ENCODE measurements at regions of chr16 and their contacts with region 1.

Region 1: DNA sequence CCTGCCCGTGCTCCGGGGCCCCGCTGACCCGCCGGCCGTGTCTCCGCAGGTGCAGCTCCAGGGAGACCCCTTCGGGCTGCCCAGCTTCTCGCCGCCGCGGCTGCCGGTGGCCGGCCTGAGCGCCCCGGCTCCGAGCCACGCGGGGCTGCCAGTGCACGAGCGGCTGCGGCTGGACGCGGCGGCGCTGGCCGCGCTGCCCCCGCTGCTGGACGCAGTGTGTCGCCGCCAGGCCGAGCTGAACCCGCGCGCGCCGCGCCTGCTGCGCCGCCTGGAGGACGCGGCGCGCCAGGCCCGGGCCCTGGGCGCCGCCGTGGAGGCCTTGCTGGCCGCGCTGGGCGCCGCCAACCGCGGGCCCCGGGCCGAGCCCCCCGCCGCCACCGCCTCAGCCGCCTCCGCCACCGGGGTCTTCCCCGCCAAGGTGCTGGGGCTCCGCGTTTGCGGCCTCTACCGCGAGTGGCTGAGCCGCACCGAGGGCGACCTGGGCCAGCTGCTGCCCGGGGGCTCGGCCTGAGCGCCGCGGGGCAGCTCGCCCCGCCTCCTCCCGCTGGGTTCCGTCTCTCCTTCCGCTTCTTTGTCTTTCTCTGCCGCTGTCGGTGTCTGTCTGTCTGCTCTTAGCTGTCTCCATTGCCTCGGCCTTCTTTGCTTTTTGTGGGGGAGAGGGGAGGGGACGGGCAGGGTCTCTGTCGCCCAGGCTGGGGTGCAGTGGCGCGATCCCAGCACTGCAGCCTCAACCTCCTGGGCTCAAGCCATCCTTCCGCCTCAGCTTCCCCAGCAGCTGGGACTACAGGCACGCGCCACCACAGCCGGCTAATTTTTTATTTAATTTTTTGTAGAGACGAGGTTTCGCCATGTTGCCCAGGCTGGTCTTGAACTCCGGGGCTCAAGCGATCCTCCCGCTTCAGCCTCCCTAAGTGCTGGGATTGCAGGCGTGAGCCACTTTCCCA is 5.9 kb downstream of the CTF1 start:
- DNase-seq: peak; percentile 31 to 71 (median 59)
- H3K4me3 ChIP-seq: peak overlapping the region; percentile 63
- H3K4me3 Mint-ChIP-seq: peak overlapping the region; percentile 90 to 98 (median 97)
- H3K27ac ChIP-seq: peak overlapping the region; percentile 54
- H3K27ac Mint-ChIP-seq: peak overlapping the region; percentile 96 to 100 (median 98)
- H3K4me1 ChIP-seq: peaks cover 39% of the 10 kb centered on the region
- H3K4me1 Mint-ChIP-seq: peaks cover 31 to 45% (median 31%) of the 10 kb centered on the region in 3 donors
- H3K27me3 ChIP-seq: no peaks in the 10 kb centered on the region
- H3K27me3 Mint-ChIP-seq: no peaks in the 10 kb centered on the region

Region 2: GRCh38 chr16:30813821-30814189 is 88.5 kb before region 1 on chr16:
- CTCF ChIA-PET with region 1: interaction called, 11 read pairs
- POLR2A ChIA-PET with region 1: no interaction called
- DNase-seq: no peak
- H3K4me3 ChIP-seq: peak overlapping the region; percentile 59
- H3K4me3 Mint-ChIP-seq: peak overlapping the region; percentile 77 to 91 (median 87)
- H3K27ac ChIP-seq: peak overlapping the region; percentile 79
- H3K27ac Mint-ChIP-seq: peak overlapping the region; percentile 69 to 96 (median 90)
- H3K4me1 ChIP-seq: peaks cover 13% of the 10 kb centered on the region
- H3K4me1 Mint-ChIP-seq: peaks cover 7 to 13% (median 13%) of the 10 kb centered on the region in 3 donors
- H3K27me3 ChIP-seq: no peaks in the 10 kb centered on the region
- H3K27me3 Mint-ChIP-seq: no peaks in the 10 kb centered on the region

Region 3: DNA sequence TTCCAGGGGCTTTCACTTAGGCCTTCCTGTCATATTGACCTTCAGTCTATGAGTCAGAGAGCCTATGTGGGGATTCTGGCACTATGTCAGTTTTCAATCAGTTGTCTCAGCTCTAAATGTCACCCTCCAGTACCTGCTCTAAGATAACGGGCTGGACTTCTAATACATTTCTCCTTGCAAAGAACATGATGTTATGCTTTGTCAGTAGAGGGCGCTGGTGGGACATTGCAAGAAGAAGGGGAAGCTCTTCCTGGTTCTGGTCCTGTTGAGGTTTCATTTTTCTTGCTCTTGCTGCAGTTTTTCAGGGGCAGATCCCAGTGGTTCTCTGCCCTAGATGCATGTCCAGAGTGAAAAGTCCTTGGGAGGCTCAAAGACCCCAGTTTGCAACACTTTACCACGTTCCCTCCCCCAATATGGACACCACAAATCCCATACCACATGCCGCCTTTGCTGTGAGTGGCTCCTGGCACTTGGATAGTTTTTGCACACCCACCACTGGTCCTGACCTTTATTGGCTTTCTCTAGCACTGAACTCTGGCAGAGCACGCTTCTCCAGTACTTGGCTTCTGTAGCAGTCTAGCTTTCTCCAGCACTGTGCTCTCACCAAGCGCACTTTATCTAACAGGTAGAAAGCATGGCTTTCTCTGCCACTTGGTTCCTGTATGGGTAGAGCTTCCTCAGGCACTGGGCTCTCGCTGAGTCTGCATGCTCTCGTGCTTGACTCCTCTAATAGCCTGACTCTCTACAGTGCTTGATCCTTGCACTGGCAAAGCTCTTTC is 57.4 kb before region 1 on chr16:
- CTCF ChIA-PET with region 1: interaction called, 88 read pairs
- POLR2A ChIA-PET with region 1: interaction called, 8 read pairs
- DNase-seq: peak; percentile 69 to 86 (median 79)
- H3K4me3 ChIP-seq: peak overlapping the region; percentile 17
- H3K4me3 Mint-ChIP-seq: peak overlapping the region in 6 of 7 donors; percentile 60 to 71 (median 68)
- H3K27ac ChIP-seq: no peak overlapping the region
- H3K27ac Mint-ChIP-seq: peak overlapping the region in 6 of 8 donors; percentile 10 to 86 (median 37)
- H3K4me1 ChIP-seq: peaks cover 7% of the 10 kb centered on the region
- H3K4me1 Mint-ChIP-seq: peaks cover 8 to 10% (median 10%) of the 10 kb centered on the region in 3 donors
- H3K27me3 ChIP-seq: no peaks in the 10 kb centered on the region
- H3K27me3 Mint-ChIP-seq: peaks cover 0 to 2% of the 10 kb centered on the region in 2 donors

Region 4: DNA sequence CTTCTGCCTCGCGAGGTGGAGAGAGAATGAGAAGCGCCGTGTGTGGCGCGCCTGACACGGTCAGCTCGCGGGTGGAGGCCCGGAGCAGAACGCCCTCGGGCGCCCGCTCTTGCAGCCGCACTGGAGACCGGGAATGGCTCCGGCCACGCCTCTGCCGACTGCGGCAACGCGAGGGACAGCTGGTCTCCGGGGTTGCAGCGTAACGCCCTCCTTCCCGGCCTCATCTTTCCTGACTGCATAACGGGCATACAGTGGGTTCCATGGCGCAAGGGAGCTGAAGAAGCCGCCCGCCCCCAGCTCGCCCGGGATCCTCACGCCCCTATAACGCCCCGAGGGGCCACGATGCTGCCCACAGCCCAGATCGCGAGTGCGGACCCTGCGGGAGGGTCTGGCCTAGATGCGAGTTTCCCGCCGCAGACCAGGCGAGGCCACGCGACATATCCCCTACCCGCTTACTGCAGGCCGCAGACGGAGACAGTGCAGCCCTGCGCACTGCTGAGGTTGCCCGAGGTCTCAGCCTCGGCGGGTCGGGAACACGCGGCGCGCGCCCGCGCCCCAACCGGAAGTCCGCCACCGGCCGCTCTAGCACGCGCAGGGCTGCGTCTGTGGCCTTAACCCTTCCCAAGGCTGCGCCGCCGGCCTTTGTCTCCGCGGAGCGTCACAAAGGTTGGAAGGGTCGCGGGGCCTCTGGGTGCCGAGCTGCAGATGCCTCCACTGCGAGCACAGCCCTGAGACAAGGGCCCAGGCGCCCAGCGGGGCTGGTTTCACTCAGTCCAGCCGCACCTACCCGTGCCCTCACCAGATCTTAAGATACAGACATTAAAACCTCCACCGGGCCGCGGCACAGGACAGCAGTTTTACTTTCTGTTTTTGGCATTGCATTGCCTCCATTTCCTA is 27.2 kb before region 1 on chr16:
- CTCF ChIA-PET with region 1: interaction called, 38 read pairs
- POLR2A ChIA-PET with region 1: interaction called, 42 read pairs
- DNase-seq: peak; percentile 76 to 89 (median 85)
- H3K4me3 ChIP-seq: peak overlapping the region; percentile 81
- H3K4me3 Mint-ChIP-seq: peak overlapping the region; percentile 86 to 98 (median 90)
- H3K27ac ChIP-seq: peak overlapping the region; percentile 84
- H3K27ac Mint-ChIP-seq: peak overlapping the region; percentile 90 to 98 (median 97)
- H3K4me1 ChIP-seq: peaks cover 31% of the 10 kb centered on the region
- H3K4me1 Mint-ChIP-seq: peaks cover 31 to 51% (median 44%) of the 10 kb centered on the region in 3 donors
- H3K27me3 ChIP-seq: no peaks in the 10 kb centered on the region
- H3K27me3 Mint-ChIP-seq: no peaks in the 10 kb centered on the region

Region 5: GRCh38 chr16:30922420-30922959 is 20.2 kb after region 1 on chr16:
- CTCF ChIA-PET with region 1: interaction called, 11 read pairs
- POLR2A ChIA-PET with region 1: interaction called, 3 read pairs
- DNase-seq: peak; percentile 99 to 100 (median 100)
- H3K4me3 ChIP-seq: peak overlapping the region; percentile 95
- H3K4me3 Mint-ChIP-seq: peak overlapping the region; percentile 93 to 99 (median 96)
- H3K27ac ChIP-seq: peak overlapping the region; percentile 84
- H3K27ac Mint-ChIP-seq: peak overlapping the region; percentile 95 to 100 (median 98)
- H3K4me1 ChIP-seq: no peaks in the 10 kb centered on the region
- H3K4me1 Mint-ChIP-seq: peaks cover 15 to 33% (median 16%) of the 10 kb centered on the region in 3 donors
- H3K27me3 ChIP-seq: no peaks in the 10 kb centered on the region
- H3K27me3 Mint-ChIP-seq: no peaks in the 10 kb centered on the region

Region 6: DNA sequence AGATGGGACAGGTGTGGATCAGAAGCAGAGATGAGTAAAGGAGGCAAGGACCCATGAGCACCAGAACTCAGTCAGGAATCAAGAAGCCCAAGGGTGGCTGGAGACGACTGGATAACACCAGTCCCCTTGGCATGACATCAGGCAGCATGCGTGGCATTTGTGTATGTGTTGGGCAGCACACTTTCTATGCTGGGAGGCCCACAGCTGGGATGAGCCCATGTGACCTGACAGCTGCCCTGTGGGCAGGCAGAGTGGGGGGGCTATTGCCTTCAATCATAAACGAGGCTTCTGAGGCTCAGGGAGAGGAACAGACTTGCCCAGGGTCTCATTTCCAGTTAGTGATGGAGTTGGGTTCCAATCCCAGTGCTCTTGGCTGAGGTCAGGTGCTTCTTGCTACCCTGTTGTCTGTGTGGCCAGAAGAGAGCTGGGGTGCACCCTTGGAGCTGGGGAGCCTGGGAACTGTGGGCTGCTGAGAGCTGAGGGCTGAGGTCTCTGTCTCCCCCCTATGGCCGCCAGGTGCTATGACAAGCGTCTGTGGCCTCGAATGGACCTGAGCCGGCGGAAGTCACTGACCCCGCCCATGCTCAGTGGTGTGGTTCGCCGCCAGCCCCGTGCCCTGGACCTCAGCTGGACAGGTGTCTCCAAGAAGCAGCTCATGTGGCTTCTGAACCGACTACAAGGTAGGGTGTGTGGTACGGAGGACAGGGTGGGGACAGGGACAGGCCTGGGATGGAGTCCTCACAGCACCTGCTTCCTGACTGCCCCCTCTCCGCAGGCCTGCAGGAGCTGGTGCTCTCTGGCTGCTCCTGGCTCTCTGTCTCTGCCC is 39.5 kb after region 1 on chr16:
- CTCF ChIA-PET with region 1: interaction called, 16 read pairs
- POLR2A ChIA-PET with region 1: no interaction called
- DNase-seq: peak; percentile 53 to 74 (median 55)
- H3K4me3 ChIP-seq: no peak overlapping the region
- H3K4me3 Mint-ChIP-seq: peak overlapping the region in 4 of 7 donors; percentile 34 to 84 (median 51)
- H3K27ac ChIP-seq: no peak overlapping the region
- H3K27ac Mint-ChIP-seq: peak overlapping the region in 4 of 8 donors; percentile 50 to 84 (median 59)
- H3K4me1 ChIP-seq: peaks cover 7% of the 10 kb centered on the region
- H3K4me1 Mint-ChIP-seq: peaks cover 10 to 24% (median 14%) of the 10 kb centered on the region in 3 donors
- H3K27me3 ChIP-seq: no peaks in the 10 kb centered on the region
- H3K27me3 Mint-ChIP-seq: no peaks in the 10 kb centered on the region

Measured in CD8-positive, alpha-beta memory T cell (primary cell).